Transverse colon (tissue), 4 donors: ENCODE measurements at regions of chr3 and their contacts with region 1.

Region 1: DNA sequence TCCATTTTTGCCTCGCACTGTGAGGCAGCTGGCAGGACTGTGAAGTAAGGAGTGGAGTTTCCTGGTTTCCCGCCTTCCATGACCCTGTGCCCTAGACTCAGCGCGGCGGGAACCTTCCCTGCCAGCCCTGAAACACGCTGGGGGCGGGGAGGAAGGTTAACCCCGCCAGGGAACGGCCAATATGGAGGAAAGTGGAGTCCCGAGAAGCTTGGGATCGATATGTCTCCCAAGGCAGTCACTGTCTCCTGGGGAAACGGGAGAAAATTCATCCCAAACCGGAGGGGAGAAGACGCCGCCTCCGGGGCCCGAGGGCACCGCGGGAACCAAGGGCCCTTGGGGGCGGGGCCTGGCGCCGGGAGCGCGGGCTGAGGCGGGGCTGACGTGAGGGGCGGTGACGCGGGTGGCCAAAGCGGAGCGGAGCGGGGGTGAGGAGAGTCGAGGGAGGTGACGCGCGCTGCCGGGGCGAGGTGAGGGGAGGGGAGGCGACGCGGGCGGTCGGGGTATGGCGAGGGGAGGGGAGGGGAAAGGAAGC is at the start of gene HMCES:
- DNase-seq: peak; percentile 95
- H3K4me3 ChIP-seq: peak within 1 kb of the TSS; percentile 74 to 89 (median 87)
- H3K27ac ChIP-seq: peak within 1 kb of the TSS; percentile 92 to 98 (median 96)
- H3K4me1 ChIP-seq: peaks cover 16 to 39% (median 21%) of the 10 kb centered on the region in 4 donors
- H3K27me3 ChIP-seq: no peaks in the 10 kb centered on the region
- CTCF ChIP-seq: peak in 3 of 5 experiments; percentile 2 to 37 (median 27)
- EP300 ChIP-seq: no peak
- POLR2A ChIP-seq: peak; percentile 95
- total RNA-seq, gene HMCES: 11.3 to 32.6 (median 23.9) TPM

Region 2: GRCh38 chr3:129316131-129317013 is 37.9 kb after region 1 on chr3:
- in situ Hi-C with region 1: no loop called
- intact Hi-C with region 1: loop called (anchors 5 kb)
- DNase-seq: peak; percentile 89
- H3K4me3 ChIP-seq: peak overlapping the region; percentile 45 to 97 (median 87)
- H3K27ac ChIP-seq: peak overlapping the region; percentile 88 to 94 (median 91)
- H3K4me1 ChIP-seq: peaks cover 8 to 25% (median 19%) of the 10 kb centered on the region in 4 donors
- H3K27me3 ChIP-seq: no peaks in the 10 kb centered on the region
- CTCF ChIP-seq: peak in 3 of 5 experiments; percentile 42 to 59 (median 44)
- EP300 ChIP-seq: no peak
- POLR2A ChIP-seq: peak; percentile 99